ENCODE measurements at regions of chr2 and their contacts with region 1.

Region 1: GRCh38 chr2:161250864-161251436 is 57.3 kb upstream of the PSMD14 start:
- DNase-seq: peak; percentile 67
- H3K4me3 ChIP-seq: no peak overlapping the region; a peak in 1 of 4 replicates
- H3K27ac ChIP-seq: no peak overlapping the region
- H3K4me1 ChIP-seq: no peaks in the 10 kb centered on the region; a peak in 1 of 4 replicates
- H3K27me3 ChIP-seq: 0 out of 2 replicates have a peak, but pooled peaks cover 4% of the 10 kb centered on the region
- CTCF ChIP-seq: peak; percentile 76
- EP300 ChIP-seq: no peak
- RAD21 ChIP-seq: peak; percentile 69

Region 2: DNA sequence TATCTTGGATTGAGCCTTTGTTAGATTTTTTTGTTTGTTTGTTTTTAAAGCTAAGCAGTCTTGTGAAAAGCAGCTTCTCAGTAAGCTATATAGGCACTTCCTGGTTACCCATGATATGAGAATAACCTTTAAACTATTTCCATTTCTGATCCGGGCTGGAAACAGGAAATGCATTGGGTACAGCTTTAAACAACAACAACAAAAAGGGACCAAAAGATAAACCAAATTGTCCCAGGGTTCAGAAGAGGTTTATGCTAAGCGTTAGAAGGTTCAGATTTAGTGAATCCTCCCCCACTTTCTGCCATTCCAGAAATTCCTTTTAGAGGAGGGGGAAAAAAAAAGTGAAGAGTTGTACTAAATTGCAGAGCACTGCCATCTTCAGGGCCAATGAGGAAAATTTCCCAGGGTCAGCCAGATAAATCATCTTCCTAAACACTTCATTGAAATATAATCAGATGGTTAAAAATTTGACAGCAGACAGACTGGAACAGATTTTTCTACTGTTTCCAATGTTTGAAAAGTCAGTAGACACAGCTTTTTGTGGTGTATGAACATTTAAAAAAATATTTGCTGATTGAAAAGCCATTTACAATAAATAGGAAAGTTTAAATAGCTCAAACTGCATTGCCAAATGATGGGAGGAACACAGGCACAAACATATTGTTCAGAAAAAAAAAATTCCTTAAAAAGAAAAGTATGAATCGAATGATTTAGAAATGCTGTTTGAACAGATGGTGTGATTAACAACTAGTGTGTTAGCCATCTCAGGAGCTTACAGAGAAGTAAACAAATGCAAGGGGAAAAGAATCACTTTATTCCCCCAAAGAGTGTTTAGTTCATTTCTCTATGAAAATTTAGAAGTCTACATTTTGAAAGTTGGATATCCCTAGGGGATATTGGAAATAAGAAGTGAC is 280.6 kb before region 1 on chr2:
- CTCF ChIA-PET with region 1: no interaction called
- POLR2A ChIA-PET with region 1: no interaction called
- DNase-seq: peak; percentile 69
- H3K4me3 ChIP-seq: no peak overlapping the region
- H3K27ac ChIP-seq: peak overlapping the region; percentile 62 to 75; a peak in 3 of 4 replicates
- H3K4me1 ChIP-seq: peaks cover 0 to 6% of the 10 kb centered on the region in 2 experiments; a peak in 2 of 4 replicates
- H3K27me3 ChIP-seq: no peaks in the 10 kb centered on the region
- CTCF ChIP-seq: peak; percentile 87
- EP300 ChIP-seq: no peak
- RAD21 ChIP-seq: peak; percentile 93

Region 3: GRCh38 chr2:161238560-161239325 is 12.2 kb before region 1 on chr2:
- CTCF ChIA-PET with region 1: interaction called, 110 read pairs
- POLR2A ChIA-PET with region 1: no interaction called
- DNase-seq: peak; percentile 80
- H3K4me3 ChIP-seq: peak overlapping the region; percentile 52 to 59
- H3K27ac ChIP-seq: no peak overlapping the region
- H3K4me1 ChIP-seq: peaks cover 5 to 11% of the 10 kb centered on the region in 2 experiments; a peak in 2 of 4 replicates
- H3K27me3 ChIP-seq: no peaks in the 10 kb centered on the region
- CTCF ChIP-seq: no peak
- EP300 ChIP-seq: no peak
- RAD21 ChIP-seq: no peak

Region 4: DNA sequence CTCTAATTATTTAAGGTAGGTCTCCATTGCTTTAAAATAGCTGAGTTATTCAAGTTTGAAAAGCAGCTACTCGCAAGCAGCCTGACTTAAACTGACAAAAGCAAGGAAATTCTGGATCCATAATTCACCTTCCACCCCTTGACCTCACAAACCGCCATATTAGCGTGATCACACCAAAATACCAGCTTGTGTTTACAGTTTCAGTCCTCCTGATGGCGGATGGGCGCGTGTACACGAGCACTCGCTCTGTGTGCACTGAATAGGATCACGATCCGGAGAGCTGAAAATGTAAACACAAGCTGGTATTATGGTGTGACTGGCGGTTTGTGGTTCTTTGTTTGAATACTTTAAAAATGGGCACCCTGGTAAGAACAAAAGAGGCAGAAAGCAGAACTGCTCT is 14.9 kb after region 1 on chr2:
- CTCF ChIA-PET with region 1: interaction called, 18 read pairs
- POLR2A ChIA-PET with region 1: no interaction called
- DNase-seq: no peak
- H3K4me3 ChIP-seq: no peak overlapping the region
- H3K27ac ChIP-seq: no peak overlapping the region
- H3K4me1 ChIP-seq: no peaks in the 10 kb centered on the region
- H3K27me3 ChIP-seq: no peaks in the 10 kb centered on the region; the same call in 1 of the 2 replicates
- CTCF ChIP-seq: no peak
- EP300 ChIP-seq: no peak
- RAD21 ChIP-seq: no peak

Region 5: GRCh38 chr2:161273038-161273760 is 22.2 kb after region 1 on chr2:
- CTCF ChIA-PET with region 1: interaction called, 40 read pairs
- POLR2A ChIA-PET with region 1: no interaction called
- DNase-seq: peak; percentile 45
- H3K4me3 ChIP-seq: no peak overlapping the region
- H3K27ac ChIP-seq: no peak overlapping the region
- H3K4me1 ChIP-seq: no peaks in the 10 kb centered on the region
- H3K27me3 ChIP-seq: no peaks in the 10 kb centered on the region; the same call in 1 of the 2 replicates
- CTCF ChIP-seq: peak; percentile 88
- EP300 ChIP-seq: no peak
- RAD21 ChIP-seq: peak; percentile 79